CD14-positive monocyte (primary cell): ENCODE measurements at regions of chr21 and their contacts with region 1.

Region 1: DNA sequence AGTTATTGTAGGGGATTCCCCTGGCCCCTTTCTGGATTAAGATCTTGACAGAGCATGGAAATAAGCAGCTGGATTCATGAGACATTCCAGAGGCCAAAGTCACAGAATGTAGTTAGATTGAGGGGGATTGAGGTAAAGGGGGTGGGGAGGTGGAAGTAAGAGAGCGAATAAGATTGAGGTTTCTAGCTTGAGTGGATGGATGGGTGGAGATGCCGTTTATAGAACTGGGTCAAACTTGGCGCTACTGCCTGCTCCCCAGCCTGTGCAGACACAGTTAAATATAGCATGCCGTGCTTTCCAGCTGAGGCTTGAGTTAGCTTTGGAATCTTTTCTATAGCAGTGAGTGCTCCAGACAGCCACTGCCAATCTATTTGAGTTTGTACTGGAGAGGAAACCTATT is 85.7 kb downstream of the DYRK1A start:
- DNase-seq: no peak
- H3K4me3 ChIP-seq: no peak overlapping the region
- H3K4me3 Mint-ChIP-seq: no peak overlapping the region
- H3K27ac ChIP-seq: no peak overlapping the region
- H3K27ac Mint-ChIP-seq: peak overlapping the region in 4 of 7 donors; percentile 13 to 60 (median 38)
- H3K4me1 ChIP-seq: peaks cover 4 to 9% of the 10 kb centered on the region in 2 donors
- H3K4me1 Mint-ChIP-seq: peaks cover 45% of the 10 kb centered on the region
- H3K27me3 ChIP-seq: no peaks in the 10 kb centered on the region
- H3K27me3 Mint-ChIP-seq: no peaks in the 10 kb centered on the region
- CTCF ChIP-seq: no peak

Region 2: DNA sequence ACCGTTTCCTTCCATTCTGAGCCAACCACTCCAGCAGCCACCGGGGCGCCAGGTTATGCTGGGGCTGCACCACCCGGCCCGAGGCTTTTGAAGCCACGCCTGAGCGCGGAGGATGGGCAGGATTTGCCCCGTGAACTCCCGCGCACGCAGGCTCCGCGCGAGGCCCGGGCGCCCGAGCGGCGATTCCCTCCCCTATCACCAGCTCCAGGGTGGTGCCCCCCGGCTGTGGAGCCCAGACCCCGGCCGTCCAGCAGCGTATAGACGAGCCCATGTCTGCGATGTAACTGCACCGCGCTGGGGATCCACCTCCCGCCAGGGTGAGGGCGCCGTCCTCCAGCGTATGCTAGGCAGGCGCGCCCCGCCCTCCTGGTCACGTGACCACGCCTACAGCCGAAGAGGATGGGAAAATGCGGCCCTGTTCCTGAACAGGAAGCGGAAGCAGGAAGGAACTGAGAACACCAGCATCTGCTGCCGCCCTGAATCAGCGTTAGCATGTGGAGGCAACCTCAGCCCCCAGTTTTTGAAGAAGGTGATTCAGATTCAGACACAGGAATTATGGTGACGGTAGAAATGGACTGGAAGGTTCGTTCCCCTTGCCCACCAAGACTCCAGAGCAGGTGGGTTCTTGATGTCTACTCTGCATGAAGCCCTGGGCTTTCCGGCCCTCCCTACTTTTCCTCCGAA is 231.1 kb before region 1 on chr21:
- intact Hi-C with region 1: no loop called
- DNase-seq: peak; percentile 89 to 96 (median 94)
- H3K4me3 ChIP-seq: peak overlapping the region; percentile 55 to 82 (median 67)
- H3K4me3 Mint-ChIP-seq: peak overlapping the region; percentile 90 to 93
- H3K27ac ChIP-seq: peak overlapping the region; percentile 21 to 55
- H3K27ac Mint-ChIP-seq: peak overlapping the region; percentile 32 to 87 (median 78)
- H3K4me1 ChIP-seq: peaks cover 14 to 24% of the 10 kb centered on the region in 2 donors
- H3K4me1 Mint-ChIP-seq: peaks cover 23% of the 10 kb centered on the region
- H3K27me3 ChIP-seq: no peaks in the 10 kb centered on the region
- H3K27me3 Mint-ChIP-seq: peaks cover 2 to 10% (median 9%) of the 10 kb centered on the region in 3 donors
- CTCF ChIP-seq: peak; percentile 67

Region 3: GRCh38 chr21:37244501-37245083 is 207.6 kb before region 1 on chr21:
- intact Hi-C with region 1: loop called in 1 of 2 experiments (anchors 10 kb)
- DNase-seq: no peak
- H3K4me3 ChIP-seq: no peak overlapping the region
- H3K4me3 Mint-ChIP-seq: no peak overlapping the region
- H3K27ac ChIP-seq: no peak overlapping the region
- H3K27ac Mint-ChIP-seq: peak overlapping the region in 5 of 7 donors; percentile 11 to 49 (median 33)
- H3K4me1 ChIP-seq: no peaks in the 10 kb centered on the region
- H3K4me1 Mint-ChIP-seq: peaks cover 29% of the 10 kb centered on the region
- H3K27me3 ChIP-seq: no peaks in the 10 kb centered on the region
- H3K27me3 Mint-ChIP-seq: no peaks in the 10 kb centered on the region
- CTCF ChIP-seq: no peak

Region 4: DNA sequence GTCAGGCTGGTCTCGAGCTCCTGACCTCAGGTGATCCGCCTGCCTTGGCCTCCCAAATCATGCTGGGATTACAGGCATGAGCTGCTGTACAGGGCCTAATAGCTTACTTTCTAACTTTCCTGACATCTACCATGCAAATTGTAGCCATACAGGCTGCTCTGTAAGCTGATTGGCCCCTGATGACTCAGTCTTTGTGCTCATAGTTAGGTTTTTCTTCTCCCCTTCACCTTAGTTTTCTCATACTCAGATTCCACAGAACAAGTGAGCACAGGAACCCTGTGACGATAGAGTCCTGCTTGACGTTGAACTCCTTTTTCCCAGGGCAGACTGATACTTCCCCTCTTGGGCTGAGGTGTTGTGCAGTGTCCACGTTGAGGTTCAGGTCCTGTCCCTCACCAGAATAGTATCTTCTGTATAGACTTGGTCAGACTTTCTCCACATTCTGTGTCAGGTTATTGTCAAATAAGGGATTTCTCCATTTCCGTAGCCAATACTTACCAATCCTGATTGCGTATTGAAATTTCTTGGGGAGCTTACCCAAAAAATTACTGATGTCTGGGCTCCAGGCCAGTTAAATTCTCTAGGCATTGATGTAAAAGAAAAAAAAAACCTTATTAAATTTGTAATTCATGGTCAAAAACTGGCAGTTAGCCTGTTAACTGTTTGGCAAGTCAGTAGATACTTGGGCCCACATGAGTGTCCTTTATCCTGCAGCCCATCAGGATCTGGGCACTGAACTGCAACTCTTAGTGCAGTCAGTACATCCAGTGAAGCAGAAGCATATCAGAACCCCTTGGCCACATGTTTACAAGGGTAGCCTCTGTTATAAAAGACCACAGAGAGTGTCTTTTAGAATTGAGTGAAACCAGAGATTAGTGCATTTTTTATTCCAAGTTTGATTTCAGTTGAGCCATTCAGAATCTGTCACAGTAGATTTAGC is 32.6 kb after region 1 on chr21:
- intact Hi-C with region 1: no loop called
- DNase-seq: no peak
- H3K4me3 ChIP-seq: no peak overlapping the region
- H3K4me3 Mint-ChIP-seq: no peak overlapping the region
- H3K27ac ChIP-seq: peak overlapping the region in 1 of 2 donors; percentile 27
- H3K27ac Mint-ChIP-seq: peak overlapping the region in 4 of 7 donors; percentile 7 to 55 (median 28)
- H3K4me1 ChIP-seq: no peaks in the 10 kb centered on the region
- H3K4me1 Mint-ChIP-seq: no peaks in the 10 kb centered on the region
- H3K27me3 ChIP-seq: no peaks in the 10 kb centered on the region
- H3K27me3 Mint-ChIP-seq: peaks cover 0 to 2% (median 0%) of the 10 kb centered on the region in 3 donors
- CTCF ChIP-seq: no peak

Region 5: GRCh38 chr21:37503848-37504467 is 51.7 kb after region 1 on chr21:
- intact Hi-C with region 1: no loop called
- DNase-seq: no peak
- H3K4me3 ChIP-seq: no peak overlapping the region
- H3K4me3 Mint-ChIP-seq: no peak overlapping the region
- H3K27ac ChIP-seq: peak overlapping the region in 1 of 2 donors; percentile 21
- H3K27ac Mint-ChIP-seq: peak overlapping the region in 3 of 7 donors; percentile 28 to 49 (median 37)
- H3K4me1 ChIP-seq: no peaks in the 10 kb centered on the region
- H3K4me1 Mint-ChIP-seq: no peaks in the 10 kb centered on the region
- H3K27me3 ChIP-seq: no peaks in the 10 kb centered on the region
- H3K27me3 Mint-ChIP-seq: no peaks in the 10 kb centered on the region
- CTCF ChIP-seq: no peak